ENCODE measurements at regions of chr3 and their contacts with region 1.

Region 1: GRCh38 chr3:196639483-196640296 is at the start of gene NRROS:
- DNase-seq: peak; percentile 64 to 67
- ATAC-seq: peak; percentile 82 to 91 (median 88)
- H3K4me3 ChIP-seq: peak within 1 kb of the TSS; percentile 40 to 86 (median 68)
- H3K27ac ChIP-seq: peak within 1 kb of the TSS; percentile 59 to 94 (median 77)
- H3K4me1 ChIP-seq: peaks cover 0 to 83% (median 12%) of the 10 kb centered on the region in 9 donors
- H3K27me3 ChIP-seq: peaks cover 0 to 28% (median 12%) of the 10 kb centered on the region in 7 donors
- CTCF ChIP-seq: no peak
- total RNA-seq, gene NRROS: 1.1 to 11.7 (median 3.0) TPM

Region 2: GRCh38 chr3:196568246-196569002 is 71.3 kb before region 1 on chr3 and contains the starts of genes FBXO45 and WDR53:
- intact Hi-C with region 1: no loop called
- DNase-seq: peak; percentile 94
- ATAC-seq: peak; percentile 99 to 100 (median 99)
- H3K4me3 ChIP-seq: peak within 1 kb of the TSS; percentile 67 to 96 (median 79)
- H3K27ac ChIP-seq: peak within 1 kb of the TSS; percentile 61 to 91 (median 84)
- H3K4me1 ChIP-seq: peaks cover 3 to 54% (median 28%) of the 10 kb centered on the region in 9 donors
- H3K27me3 ChIP-seq: no peaks in the 10 kb centered on the region
- CTCF ChIP-seq: peak in 1 of 9 donors; percentile 3
- total RNA-seq, gene FBXO45: 4.4 to 10.2 (median 5.9) TPM
- total RNA-seq, gene WDR53: 5.8 to 10.8 (median 8.1) TPM

Region 3: GRCh38 chr3:196670339-196670738 is 30.6 kb after region 1 on chr3:
- intact Hi-C with region 1: loop called in 3 of 10 experiments (anchors 5 kb)
- DNase-seq: no peak
- ATAC-seq: peak; percentile 55 to 93 (median 76)
- H3K4me3 ChIP-seq: peak overlapping the region in 1 of 10 donors; percentile 12
- H3K27ac ChIP-seq: peak overlapping the region in 8 of 10 donors; percentile 15 to 67 (median 48)
- H3K4me1 ChIP-seq: peaks cover 0 to 34% (median 8%) of the 10 kb centered on the region in 9 donors
- H3K27me3 ChIP-seq: peaks cover 0 to 16% (median 0%) of the 10 kb centered on the region in 7 donors
- CTCF ChIP-seq: no peak

Region 4: GRCh38 chr3:196677353-196677752 is 37.7 kb after region 1 on chr3:
- intact Hi-C with region 1: loop called in 3 of 10 experiments (anchors 5 kb)
- DNase-seq: no peak
- ATAC-seq: no peak
- H3K4me3 ChIP-seq: no peak overlapping the region
- H3K27ac ChIP-seq: no peak overlapping the region
- H3K4me1 ChIP-seq: peaks cover 0 to 14% (median 0%) of the 10 kb centered on the region in 9 donors
- H3K27me3 ChIP-seq: peaks cover 0 to 38% (median 3%) of the 10 kb centered on the region in 7 donors
- CTCF ChIP-seq: no peak

Measured in heart right ventricle (tissue), 16 donors.